Endothelial cell of umbilical vein (primary cell): ENCODE measurements at regions of chr11 and their contacts with region 1.

Region 1: GRCh38 chr11:119356349-119357031 is 10.0 kb upstream of the MFRP start:
- DNase-seq: peak; percentile 67
- H3K4me3 ChIP-seq: peak overlapping the region; percentile 65 to 69 (median 67)
- H3K27ac ChIP-seq: peak overlapping the region; percentile 51
- H3K4me1 ChIP-seq: peaks cover 5% of the 10 kb centered on the region
- H3K27me3 ChIP-seq: no peaks in the 10 kb centered on the region
- CTCF ChIP-seq: peak; percentile 91 to 94
- POLR2A ChIP-seq: no peak

Region 2: DNA sequence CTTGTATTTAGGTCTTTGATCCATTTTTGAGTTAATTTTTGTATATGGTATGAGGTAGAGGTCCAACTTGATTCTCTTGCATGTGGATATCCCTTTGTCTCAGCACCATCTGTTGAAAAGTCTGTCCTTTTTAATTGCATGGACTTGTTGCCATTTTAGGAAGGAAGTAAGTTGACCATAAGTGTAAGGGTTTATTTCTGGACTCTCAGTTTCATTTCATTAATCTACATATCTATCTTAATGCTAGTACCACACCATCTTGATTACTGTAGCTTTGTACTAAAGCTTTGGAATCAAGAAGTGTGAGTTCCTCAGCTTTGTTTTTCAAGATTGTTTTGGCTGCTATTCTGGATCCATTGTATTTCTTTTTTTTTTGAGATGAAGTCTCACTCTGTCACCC is 119.0 kb before region 1 on chr11:
- CTCF ChIA-PET with region 1: no interaction called
- POLR2A ChIA-PET with region 1: no interaction called
- dilution Hi-C with region 1: no loop called
- intact Hi-C with region 1: no loop called
- DNase-seq: no peak
- H3K4me3 ChIP-seq: no peak overlapping the region
- H3K27ac ChIP-seq: no peak overlapping the region
- H3K4me1 ChIP-seq: no peaks in the 10 kb centered on the region
- H3K27me3 ChIP-seq: no peaks in the 10 kb centered on the region
- CTCF ChIP-seq: no peak
- POLR2A ChIP-seq: no peak

Region 3: DNA sequence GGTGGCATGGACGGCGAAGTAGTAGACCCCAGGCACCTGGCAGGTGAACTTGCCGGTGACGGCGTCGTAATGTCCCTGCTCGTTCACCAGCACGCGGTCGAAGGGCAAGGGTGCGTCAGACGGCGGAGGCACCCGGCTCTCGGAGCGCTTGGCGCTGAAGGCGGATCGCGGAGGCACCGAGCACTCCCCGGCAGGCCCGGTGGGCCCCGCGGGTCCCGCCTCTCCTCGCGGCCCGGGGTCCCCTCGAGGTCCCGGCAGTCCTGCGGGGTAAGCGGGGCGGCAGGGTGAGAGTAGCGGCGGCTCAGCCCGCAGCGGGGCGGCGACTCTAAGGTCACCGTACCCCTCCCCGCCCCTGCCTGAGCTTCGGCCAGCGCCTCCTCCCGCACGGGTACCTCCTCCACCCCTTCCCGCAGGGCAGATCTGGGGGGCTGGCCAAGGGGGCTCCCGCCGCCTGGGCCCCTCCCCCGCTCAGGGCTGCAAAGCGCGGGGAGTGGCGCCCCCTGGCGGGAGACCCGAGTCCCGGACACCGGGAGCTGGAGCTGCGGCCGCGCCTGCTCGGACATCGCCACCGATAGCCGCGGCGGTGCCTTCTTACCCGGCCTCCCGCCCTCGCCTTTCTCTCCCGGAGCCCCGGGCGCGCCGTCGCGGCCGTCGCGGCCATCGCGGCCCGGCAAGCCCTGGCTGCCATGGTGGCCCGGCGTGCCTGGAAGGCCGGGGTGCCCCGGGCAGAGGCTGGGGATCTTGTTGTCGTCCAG is 16.7 kb before region 1 on chr11:
- CTCF ChIA-PET with region 1: interaction called, 94 read pairs
- POLR2A ChIA-PET with region 1: interaction called, 8 read pairs
- dilution Hi-C with region 1: no loop called
- intact Hi-C with region 1: loop called (anchors 1 kb)
- DNase-seq: peak; percentile 71
- H3K4me3 ChIP-seq: peak overlapping the region; percentile 41 to 90 (median 65)
- H3K27ac ChIP-seq: peak overlapping the region; percentile 67
- H3K4me1 ChIP-seq: peaks cover 39% of the 10 kb centered on the region
- H3K27me3 ChIP-seq: no peaks in the 10 kb centered on the region
- CTCF ChIP-seq: peak; percentile 90 to 94
- POLR2A ChIP-seq: no peak

Region 4: GRCh38 chr11:119373921-119374631 is 17.6 kb after region 1 on chr11:
- CTCF ChIA-PET with region 1: interaction called, 154 read pairs
- POLR2A ChIA-PET with region 1: no interaction called
- dilution Hi-C with region 1: no loop called
- intact Hi-C with region 1: loop called (anchors 1 kb)
- DNase-seq: peak; percentile 79
- H3K4me3 ChIP-seq: no peak overlapping the region
- H3K27ac ChIP-seq: no peak overlapping the region
- H3K4me1 ChIP-seq: no peaks in the 10 kb centered on the region
- H3K27me3 ChIP-seq: no peaks in the 10 kb centered on the region
- CTCF ChIP-seq: peak; percentile 90 to 92
- POLR2A ChIP-seq: no peak

Region 5: GRCh38 chr11:119381181-119381988 is 24.9 kb after region 1 on chr11 and contains the start of gene USP2:
- CTCF ChIA-PET with region 1: interaction called, 154 read pairs
- POLR2A ChIA-PET with region 1: interaction called, 3 read pairs
- dilution Hi-C with region 1: no loop called
- intact Hi-C with region 1: no loop called
- DNase-seq: peak; percentile 95
- H3K4me3 ChIP-seq: peak within 1 kb of the TSS in 2 of 3 experiments; percentile 41 to 51
- H3K27ac ChIP-seq: no peak within 1 kb of the TSS
- H3K4me1 ChIP-seq: peaks cover 10% of the 10 kb centered on the region
- H3K27me3 ChIP-seq: peaks cover 7 to 14% of the 10 kb centered on the region in 2 experiments
- CTCF ChIP-seq: peak; percentile 92
- POLR2A ChIP-seq: no peak
- total RNA-seq, gene USP2: 1.1 and 1.2 TPM in 2 replicates

Region 6: GRCh38 chr11:119474682-119475596 is 118.4 kb after region 1 on chr11:
- CTCF ChIA-PET with region 1: interaction called, 91 read pairs
- POLR2A ChIA-PET with region 1: no interaction called
- dilution Hi-C with region 1: no loop called
- intact Hi-C with region 1: loop called (anchors 1 kb)
- DNase-seq: peak; percentile 47
- H3K4me3 ChIP-seq: no peak overlapping the region
- H3K27ac ChIP-seq: no peak overlapping the region
- H3K4me1 ChIP-seq: no peaks in the 10 kb centered on the region
- H3K27me3 ChIP-seq: peaks cover 0 to 2% of the 10 kb centered on the region in 2 experiments
- CTCF ChIP-seq: peak; percentile 79 to 83
- POLR2A ChIP-seq: no peak

Region 7: DNA sequence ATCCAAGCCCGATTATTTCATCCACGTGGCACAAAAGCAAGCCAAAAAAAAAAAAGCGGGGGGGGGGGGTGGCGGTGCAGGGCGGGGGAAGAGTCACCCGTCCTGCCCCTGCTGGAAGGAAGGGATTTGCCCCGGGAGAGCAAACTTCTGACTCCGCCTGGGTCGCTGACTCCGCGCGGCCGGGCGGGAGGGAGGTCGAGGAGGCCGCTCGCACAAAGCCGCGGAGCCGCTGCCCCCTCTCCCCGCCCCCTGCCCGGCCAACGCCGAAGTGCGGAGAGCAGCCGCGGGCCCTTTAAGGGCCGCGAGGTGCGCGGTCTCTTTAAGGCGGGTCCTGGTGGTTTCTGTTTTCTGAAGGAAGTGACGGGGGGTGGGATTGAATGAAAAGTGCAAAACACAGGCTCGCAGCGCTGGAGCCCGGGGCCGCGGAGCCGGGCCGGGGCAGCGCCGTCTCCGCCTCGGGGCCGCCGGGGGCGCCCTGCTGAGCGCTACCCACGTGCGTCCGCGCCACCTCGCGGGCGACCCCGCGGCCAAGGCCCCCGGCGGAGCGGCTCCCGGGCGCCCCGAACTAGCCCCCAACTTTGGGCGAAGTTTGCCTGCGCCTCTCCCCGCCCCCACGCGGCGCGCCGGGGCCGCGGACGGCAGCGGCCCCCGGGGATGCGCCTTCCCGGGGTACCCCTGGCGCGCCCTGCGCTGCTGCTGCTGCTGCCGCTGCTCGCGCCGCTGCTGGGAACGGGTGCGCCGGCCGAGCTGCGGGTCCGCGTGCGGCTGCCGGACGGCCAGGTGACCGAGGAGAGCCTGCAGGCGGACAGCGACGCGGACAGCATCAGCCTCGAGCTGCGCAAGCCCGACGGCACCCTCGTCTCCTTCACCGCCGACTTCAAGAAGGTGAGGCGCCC is 854.4 kb after region 1 on chr11 and contains the start of gene OAF:
- CTCF ChIA-PET with region 1: no interaction called
- POLR2A ChIA-PET with region 1: no interaction called
- dilution Hi-C with region 1: no loop called
- intact Hi-C with region 1: loop called (anchors 10 kb)
- DNase-seq: peak; percentile 84
- H3K4me3 ChIP-seq: peak within 1 kb of the TSS; percentile 37 to 67 (median 60)
- H3K27ac ChIP-seq: peak within 1 kb of the TSS; percentile 47
- H3K4me1 ChIP-seq: peaks cover 40% of the 10 kb centered on the region
- H3K27me3 ChIP-seq: no peaks in the 10 kb centered on the region
- CTCF ChIP-seq: peak in 1 of 2 donors; percentile 13
- POLR2A ChIP-seq: peak; percentile 86
- total RNA-seq, gene OAF: 26.7 and 32.1 TPM in 2 replicates